ENCODE measurements at regions of chr10 and their contacts with region 1.

Region 1: DNA sequence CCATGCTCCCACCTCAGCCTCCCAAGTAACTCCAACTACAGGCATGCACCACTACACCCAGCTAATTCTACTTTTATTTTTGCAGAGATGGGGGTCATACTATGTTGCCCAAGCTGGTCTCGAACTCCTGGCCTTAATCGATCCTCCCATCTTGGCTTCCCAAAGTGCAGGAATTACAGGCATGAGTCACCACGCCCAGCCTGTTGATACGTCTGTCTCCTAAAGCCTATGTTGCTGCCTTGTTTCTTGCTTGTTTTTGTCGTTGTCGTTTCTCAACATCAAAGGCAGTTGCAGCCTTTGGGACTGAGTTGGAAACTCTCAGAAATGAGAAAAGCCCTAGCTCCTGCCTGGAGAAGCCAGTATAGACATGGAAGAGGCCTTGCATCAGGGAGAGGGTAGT is 49.9 kb downstream of the SORBS1 start:
- DNase-seq: no peak
- ATAC-seq: no peak
- H3K4me3 ChIP-seq: no peak overlapping the region
- H3K27ac ChIP-seq: no peak overlapping the region
- H3K4me1 ChIP-seq: peaks cover 90% of the 10 kb centered on the region
- H3K27me3 ChIP-seq: no peaks in the 10 kb centered on the region
- CTCF ChIP-seq: no peak
- EP300 ChIP-seq: no peak
- POLR2A ChIP-seq: no peak
- RAD21 ChIP-seq: no peak

Region 2: GRCh38 chr10:95485445-95485844 is 25.9 kb before region 1 on chr10:
- CTCF ChIA-PET with region 1: no interaction called
- POLR2A ChIA-PET with region 1: no interaction called
- in situ Hi-C with region 1: no loop called
- intact Hi-C with region 1: loop called (anchors 2 kb)
- DNase-seq: peak; percentile 24
- ATAC-seq: no peak
- H3K4me3 ChIP-seq: no peak overlapping the region
- H3K27ac ChIP-seq: no peak overlapping the region
- H3K4me1 ChIP-seq: peaks cover 46% of the 10 kb centered on the region
- H3K27me3 ChIP-seq: no peaks in the 10 kb centered on the region
- CTCF ChIP-seq: no peak
- EP300 ChIP-seq: no peak
- POLR2A ChIP-seq: no peak
- RAD21 ChIP-seq: no peak

Region 3: DNA sequence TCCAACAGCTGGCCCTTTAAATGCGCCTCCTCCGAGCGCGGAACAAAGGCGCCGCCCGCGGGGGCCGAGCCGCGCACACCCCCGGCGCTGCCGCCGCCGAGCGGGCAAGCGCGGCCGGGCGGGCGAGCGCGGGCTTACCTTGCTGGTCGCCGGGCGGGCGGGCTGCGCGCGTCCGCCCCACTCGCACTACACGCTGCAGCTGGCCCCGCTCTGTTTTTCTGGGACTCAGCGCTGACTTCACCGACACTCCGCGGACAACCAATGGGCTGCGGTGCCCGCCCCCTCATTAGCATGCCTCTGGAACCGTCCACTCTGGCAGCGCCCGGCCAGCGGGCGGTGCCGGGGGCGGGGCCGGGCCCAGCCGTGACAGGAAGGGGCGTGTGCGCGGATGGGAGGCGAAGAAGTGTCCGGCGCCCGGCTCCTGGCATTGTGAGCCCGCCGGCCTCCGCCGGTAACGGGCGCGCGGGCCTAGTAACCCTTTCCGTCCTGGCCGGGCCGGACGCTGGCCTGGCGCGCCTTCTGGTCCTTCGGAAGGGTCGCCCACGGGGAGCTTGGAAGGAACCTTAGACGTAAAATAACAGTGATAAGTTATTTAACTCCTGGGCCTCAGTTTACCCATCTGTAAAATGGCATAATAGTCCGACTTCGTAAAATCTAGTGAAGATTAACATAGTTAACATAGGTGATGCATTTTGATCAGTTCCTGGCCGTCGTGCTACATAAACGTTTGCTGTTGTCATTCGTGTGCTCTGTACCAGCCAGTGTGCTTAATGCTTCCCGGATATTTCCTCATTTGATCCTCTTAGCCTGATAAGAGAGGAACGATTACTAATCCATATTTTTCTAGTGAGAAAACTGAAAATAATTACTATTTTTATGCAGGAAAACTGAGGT is 50.1 kb after region 1 on chr10 and contains the start of gene SORBS1:
- CTCF ChIA-PET with region 1: no interaction called
- POLR2A ChIA-PET with region 1: no interaction called
- in situ Hi-C with region 1: no loop called
- intact Hi-C with region 1: no loop called
- DNase-seq: peak; percentile 93
- ATAC-seq: peak; percentile 96
- H3K4me3 ChIP-seq: peak within 1 kb of the TSS; percentile 82 to 98 (median 91)
- H3K27ac ChIP-seq: peak within 1 kb of the TSS; percentile 41
- H3K4me1 ChIP-seq: peaks cover 88% of the 10 kb centered on the region
- H3K27me3 ChIP-seq: no peaks in the 10 kb centered on the region; a peak in 1 of 5 replicates
- CTCF ChIP-seq: no peak
- EP300 ChIP-seq: no peak
- POLR2A ChIP-seq: peak; percentile 69 to 84
- RAD21 ChIP-seq: no peak; the same call in 1 of the 2 replicates
- total RNA-seq, gene SORBS1: 16.8 and 21.0 TPM in 2 replicates

Region 4: GRCh38 chr10:95656291-95657164 is 145.2 kb after region 1 on chr10 and contains the start of gene ALDH18A1:
- CTCF ChIA-PET with region 1: no interaction called
- POLR2A ChIA-PET with region 1: no interaction called
- in situ Hi-C with region 1: no loop called
- intact Hi-C with region 1: no loop called
- DNase-seq: peak; percentile 86
- ATAC-seq: peak; percentile 90
- H3K4me3 ChIP-seq: peak within 1 kb of the TSS; percentile 75 to 90 (median 85)
- H3K27ac ChIP-seq: peak within 1 kb of the TSS; percentile 69
- H3K4me1 ChIP-seq: peaks cover 44% of the 10 kb centered on the region
- H3K27me3 ChIP-seq: no peaks in the 10 kb centered on the region; a peak in 1 of 5 replicates
- CTCF ChIP-seq: 0 out of 2 replicates have a peak, but pooled peaks have one; percentile 15
- EP300 ChIP-seq: no peak
- POLR2A ChIP-seq: peak; percentile 34 to 74; a peak in 3 of 4 replicates
- RAD21 ChIP-seq: 0 out of 2 replicates have a peak, but pooled peaks have one; percentile 16
- total RNA-seq, gene ALDH18A1: 98.4 and 263 TPM in 2 replicates

Measured in HepG2 (cell line).